HCT116 (cell line): ENCODE measurements at regions of chr16 and their contacts with region 1.

Region 1: GRCh38 chr16:55832758-55833540 is at the start of gene CES1:
- DNase-seq: no peak
- ATAC-seq: no peak
- H3K4me3 ChIP-seq: no peak within 1 kb of the TSS
- H3K27ac ChIP-seq: no peak within 1 kb of the TSS
- H3K4me1 ChIP-seq: no peaks in the 10 kb centered on the region
- H3K27me3 ChIP-seq: no peaks in the 10 kb centered on the region
- CTCF ChIP-seq: no peak
- POLR2A ChIP-seq: no peak
- RAD21 ChIP-seq: no peak
- total RNA-seq, gene CES1: 1.8 TPM

Region 2: GRCh38 chr16:55471448-55472097 is 361.4 kb before region 1 on chr16:
- CTCF ChIA-PET with region 1: no interaction called
- POLR2A ChIA-PET with region 1: no interaction called
- RAD21 ChIA-PET with region 1: no interaction called
- intact Hi-C with region 1: no loop called
- DNase-seq: peak; percentile 13
- ATAC-seq: peak; percentile 60; the same call in 1 of the 2 replicates
- H3K4me3 ChIP-seq: no peak overlapping the region
- H3K27ac ChIP-seq: peak overlapping the region; percentile 53
- H3K4me1 ChIP-seq: peaks cover 18 to 29% of the 10 kb centered on the region in 2 experiments
- H3K27me3 ChIP-seq: no peaks in the 10 kb centered on the region
- CTCF ChIP-seq: no peak
- POLR2A ChIP-seq: no peak
- RAD21 ChIP-seq: no peak

Region 3: GRCh38 chr16:55760310-55761001 is 72.5 kb before region 1 on chr16:
- CTCF ChIA-PET with region 1: no interaction called
- POLR2A ChIA-PET with region 1: no interaction called
- RAD21 ChIA-PET with region 1: no interaction called
- intact Hi-C with region 1: loop called (anchors 5 kb)
- DNase-seq: no peak
- ATAC-seq: no peak
- H3K4me3 ChIP-seq: no peak overlapping the region
- H3K27ac ChIP-seq: no peak overlapping the region
- H3K4me1 ChIP-seq: no peaks in the 10 kb centered on the region
- H3K27me3 ChIP-seq: no peaks in the 10 kb centered on the region
- CTCF ChIP-seq: no peak
- POLR2A ChIP-seq: no peak
- RAD21 ChIP-seq: no peak

Region 4: DNA sequence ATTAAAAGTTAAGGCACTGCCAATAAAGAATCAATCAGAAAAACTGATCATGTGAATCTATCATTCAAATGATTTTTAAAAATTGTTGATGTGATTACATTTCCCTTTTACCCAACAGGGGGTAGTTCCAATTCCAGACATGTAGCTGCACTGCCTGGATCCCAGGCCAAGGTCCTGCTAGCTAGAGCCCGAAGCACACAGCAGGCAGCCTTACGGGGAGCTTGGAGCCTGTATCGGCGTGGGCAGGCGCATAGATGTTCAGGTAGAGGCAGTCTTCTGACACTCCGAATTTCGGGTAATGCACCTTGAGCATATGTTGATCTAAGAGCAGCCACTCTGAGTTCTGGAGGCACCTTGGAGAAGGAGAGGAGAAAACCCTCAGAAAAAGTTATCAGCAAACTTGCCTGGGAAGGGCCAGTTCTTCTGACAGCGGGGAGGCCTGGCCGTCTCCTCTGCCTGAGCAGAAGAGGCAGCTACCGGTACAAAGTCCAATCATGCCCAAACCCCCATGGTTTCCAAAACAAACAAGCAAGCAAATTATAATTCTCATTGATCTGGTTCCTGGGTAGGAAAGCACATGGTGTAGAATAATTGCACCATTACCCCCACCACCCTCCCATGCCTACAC is 38.6 kb after region 1 on chr16:
- CTCF ChIA-PET with region 1: no interaction called
- POLR2A ChIA-PET with region 1: no interaction called
- RAD21 ChIA-PET with region 1: no interaction called
- intact Hi-C with region 1: no loop called
- DNase-seq: no peak
- ATAC-seq: no peak
- H3K4me3 ChIP-seq: no peak overlapping the region
- H3K27ac ChIP-seq: no peak overlapping the region
- H3K4me1 ChIP-seq: no peaks in the 10 kb centered on the region
- H3K27me3 ChIP-seq: peaks cover 33% of the 10 kb centered on the region
- CTCF ChIP-seq: no peak
- POLR2A ChIP-seq: no peak
- RAD21 ChIP-seq: no peak